T-cell (primary cell): ENCODE measurements at regions of chr1 and their contacts with region 1.

Region 1: GRCh38 chr1:113783254-113784099 is 24.2 kb upstream of the PHTF1 start:
- DNase-seq: peak in 33 of 35 experiments; percentile 18 to 79 (median 46)
- ATAC-seq: peak; percentile 92 to 96 (median 95)
- H3K4me3 ChIP-seq: no peak overlapping the region
- H3K4me3 Mint-ChIP-seq: peak overlapping the region in 2 of 3 donors; percentile 37 to 60
- H3K27ac ChIP-seq: peak overlapping the region; percentile 79
- H3K27ac Mint-ChIP-seq: peak overlapping the region in 1 of 2 donors; percentile 96
- H3K4me1 ChIP-seq: peaks cover 33 to 54% of the 10 kb centered on the region in 2 experiments
- H3K4me1 Mint-ChIP-seq: peaks cover 34 to 35% (median 34%) of the 10 kb centered on the region in 3 donors
- H3K27me3 ChIP-seq: no peaks in the 10 kb centered on the region
- H3K27me3 Mint-ChIP-seq: no peaks in the 10 kb centered on the region

Region 2: DNA sequence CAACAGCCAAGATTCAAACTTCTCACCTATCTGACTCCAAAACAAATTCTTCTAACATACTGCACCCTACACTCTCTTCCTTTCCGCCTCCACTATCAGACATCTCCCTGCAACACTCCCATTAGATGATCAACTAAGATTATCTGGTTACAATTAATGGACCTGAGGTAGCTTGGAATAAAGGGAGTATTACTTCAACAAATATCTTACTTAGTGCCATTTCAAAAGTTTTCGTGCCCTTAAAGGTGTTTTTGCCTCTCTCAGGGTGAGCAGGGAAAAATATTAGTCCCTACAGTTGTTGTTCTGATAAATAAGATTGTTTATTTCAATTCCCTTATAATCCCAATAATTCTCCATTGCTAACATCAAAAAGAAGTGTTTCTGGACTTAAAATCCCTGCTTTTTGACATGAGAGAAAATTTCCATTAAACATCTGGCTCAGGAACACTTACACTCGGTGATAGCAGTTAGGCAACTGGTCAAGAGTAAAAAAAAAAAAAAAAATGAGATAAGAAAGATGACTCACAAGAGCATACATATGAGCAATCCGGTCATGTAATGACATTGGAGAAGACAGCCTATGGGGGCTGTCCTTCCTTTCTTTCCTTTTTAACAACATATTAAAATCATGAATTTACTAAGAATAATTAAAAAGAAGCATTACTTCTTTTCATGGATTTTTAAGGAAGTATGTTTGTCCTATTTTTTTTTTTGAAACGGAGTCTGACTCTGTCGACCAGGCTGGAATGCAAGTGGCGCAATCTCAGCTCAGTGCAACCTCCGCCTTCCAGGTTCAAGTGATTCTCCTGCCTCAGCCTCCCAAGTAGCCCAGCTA is 21.2 kb after region 1 on chr1:
- CTCF ChIA-PET with region 1: interaction called in 1 of 2 experiments, 4 read pairs
- POLR2A ChIA-PET with region 1: interaction called in 1 of 2 experiments, 11 read pairs
- DNase-seq: no peak
- ATAC-seq: no peak
- H3K4me3 ChIP-seq: no peak overlapping the region
- H3K4me3 Mint-ChIP-seq: peak overlapping the region in 2 of 3 donors; percentile 0 to 51
- H3K27ac ChIP-seq: no peak overlapping the region
- H3K27ac Mint-ChIP-seq: peak overlapping the region in 1 of 2 donors; percentile 45
- H3K4me1 ChIP-seq: peaks cover 13 to 22% of the 10 kb centered on the region in 2 experiments
- H3K4me1 Mint-ChIP-seq: peaks cover 84 to 91% (median 88%) of the 10 kb centered on the region in 3 donors
- H3K27me3 ChIP-seq: no peaks in the 10 kb centered on the region
- H3K27me3 Mint-ChIP-seq: no peaks in the 10 kb centered on the region